GM10248 (cell line): ENCODE measurements at regions of chr9 and their contacts with region 1.

Region 1: DNA sequence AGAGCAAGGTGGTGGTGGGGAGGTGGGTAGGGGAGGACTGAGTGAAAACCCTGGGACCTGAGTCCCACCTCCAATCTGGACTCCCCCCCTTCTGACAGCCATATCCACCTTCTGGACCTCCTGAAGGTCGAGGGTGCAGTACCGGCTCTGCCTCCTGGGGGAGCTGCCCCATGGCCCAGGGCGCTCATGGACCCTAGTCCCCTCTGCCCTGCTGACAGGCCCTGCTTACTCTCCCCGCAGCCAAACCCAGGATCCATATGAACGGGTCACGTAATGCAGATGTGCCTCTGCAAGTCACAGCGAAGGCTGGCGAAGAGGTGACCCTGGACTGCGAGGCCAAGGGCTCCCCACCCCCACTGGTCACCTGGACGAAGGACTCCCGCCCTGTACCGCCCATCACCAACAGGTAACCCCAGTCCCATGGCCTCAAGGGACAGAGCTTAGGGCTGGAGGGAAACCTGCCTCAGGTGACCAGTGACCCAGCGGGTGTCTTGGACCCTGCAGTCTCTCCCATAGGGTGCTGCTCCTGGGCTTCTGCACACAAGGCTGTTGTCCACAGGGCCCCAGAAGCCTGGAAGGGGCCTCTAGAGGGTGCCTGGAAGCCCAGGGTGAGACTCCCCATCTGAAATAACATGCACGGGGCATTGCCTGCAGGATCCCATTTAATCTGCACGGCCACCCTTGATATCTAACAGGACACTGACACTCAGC is 61.7 kb downstream of the HMCN2 start:
- DNase-seq: no peak
- CTCF ChIP-seq: peak; percentile 9

Region 2: GRCh38 chr9:129998491-129999140 is 328.6 kb before region 1 on chr9:
- CTCF ChIA-PET with region 1: no interaction called
- POLR2A ChIA-PET with region 1: no interaction called
- DNase-seq: no peak
- CTCF ChIP-seq: no peak

Region 3: GRCh38 chr9:130287736-130288135 is 39.5 kb before region 1 on chr9:
- CTCF ChIA-PET with region 1: no interaction called
- POLR2A ChIA-PET with region 1: no interaction called
- DNase-seq: no peak
- CTCF ChIP-seq: no peak

Region 4: GRCh38 chr9:130315446-130316226 is 11.6 kb before region 1 on chr9:
- CTCF ChIA-PET with region 1: interaction called, 11 read pairs
- POLR2A ChIA-PET with region 1: no interaction called
- DNase-seq: no peak
- CTCF ChIP-seq: no peak